Endothelial cell of umbilical vein (primary cell): ENCODE measurements at regions of chr9 and their contacts with region 1.

Region 1: DNA sequence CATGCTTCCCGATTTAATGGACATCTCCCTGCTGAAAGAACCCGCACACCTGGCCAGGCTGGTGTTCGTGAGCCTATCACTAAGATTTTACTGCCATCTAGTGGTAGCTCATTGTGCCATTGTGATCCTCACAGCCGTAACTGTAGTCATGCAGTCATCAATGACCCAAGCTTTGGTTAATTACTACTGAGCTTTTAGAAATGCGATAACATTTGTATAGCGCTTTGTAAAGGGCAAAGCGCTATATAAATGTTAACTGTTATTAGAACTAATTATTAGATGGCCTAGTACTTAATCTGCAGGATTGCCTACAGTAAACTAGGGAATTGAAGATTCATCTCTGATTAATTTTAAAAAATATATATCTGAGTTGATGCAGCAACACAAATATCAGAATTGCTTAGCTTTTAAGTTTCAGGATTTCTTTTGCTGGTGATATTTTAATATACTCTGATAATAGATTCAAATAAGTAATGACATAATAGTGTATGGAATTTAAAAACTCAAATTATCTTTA is 90.2 kb downstream of the HACD4 start:
- DNase-seq: peak; percentile 74
- H3K4me3 ChIP-seq: no peak overlapping the region
- H3K27ac ChIP-seq: no peak overlapping the region
- H3K4me1 ChIP-seq: no peaks in the 10 kb centered on the region
- H3K27me3 ChIP-seq: no peaks in the 10 kb centered on the region
- CTCF ChIP-seq: peak; percentile 63 to 72
- POLR2A ChIP-seq: no peak

Region 2: DNA sequence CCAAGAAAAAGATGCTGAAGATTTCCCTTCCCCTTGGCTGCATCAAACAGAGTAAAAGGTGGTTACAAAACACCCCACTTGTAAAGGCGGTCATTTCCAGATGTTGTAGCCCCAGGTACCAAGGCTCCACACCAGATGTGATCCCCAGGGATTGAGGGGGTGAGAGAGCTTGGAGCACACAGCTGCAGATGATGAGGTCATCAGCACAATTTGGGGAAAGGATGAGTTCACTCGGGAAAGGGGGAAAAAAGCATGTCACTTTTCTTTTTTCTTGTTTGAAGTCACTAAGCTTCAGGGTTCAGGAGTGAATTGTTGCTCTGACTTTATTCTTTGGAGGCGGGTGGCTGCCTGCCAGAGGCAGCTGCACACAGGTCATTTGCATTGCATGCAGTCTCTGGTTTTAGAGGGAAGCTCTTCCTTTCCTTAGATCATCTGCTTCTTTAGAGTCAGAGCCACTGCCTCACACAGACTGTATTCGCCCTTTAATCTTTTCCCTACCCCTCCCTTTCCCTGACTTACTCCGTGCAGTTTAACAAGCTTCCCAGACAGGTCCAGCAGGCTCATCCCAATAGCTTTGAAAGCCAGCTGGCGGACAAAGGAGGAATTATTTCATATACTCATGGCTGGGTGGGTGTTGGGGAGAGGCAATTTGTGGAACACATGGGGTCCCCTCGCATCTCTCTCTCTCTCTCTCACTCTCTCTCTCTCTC is 743.1 kb before region 1 on chr9:
- CTCF ChIA-PET with region 1: no interaction called
- POLR2A ChIA-PET with region 1: no interaction called
- dilution Hi-C with region 1: no loop called
- intact Hi-C with region 1: loop called (anchors 10 kb)
- DNase-seq: no peak
- H3K4me3 ChIP-seq: no peak overlapping the region
- H3K27ac ChIP-seq: no peak overlapping the region
- H3K4me1 ChIP-seq: no peaks in the 10 kb centered on the region
- H3K27me3 ChIP-seq: no peaks in the 10 kb centered on the region
- CTCF ChIP-seq: no peak
- POLR2A ChIP-seq: no peak

Region 3: DNA sequence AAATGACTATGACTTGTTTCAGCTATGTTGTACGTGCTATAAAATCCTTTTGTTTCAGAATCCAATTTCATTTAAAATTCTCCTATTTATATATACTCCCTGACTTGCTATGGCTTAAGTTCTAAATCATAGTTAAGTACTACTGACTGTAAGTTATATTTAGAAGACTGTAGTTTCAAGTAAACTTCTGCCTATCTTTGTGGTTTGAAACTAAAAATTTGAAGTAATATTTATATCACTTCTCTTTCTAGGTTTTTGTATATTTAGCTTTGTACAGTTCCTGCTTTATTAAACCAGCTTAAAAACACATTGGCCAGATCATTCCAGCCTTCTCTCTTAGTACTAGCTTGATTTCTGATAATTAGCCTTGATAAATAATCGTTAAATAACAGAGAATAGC is 515.2 kb before region 1 on chr9:
- CTCF ChIA-PET with region 1: interaction called, 9 read pairs
- POLR2A ChIA-PET with region 1: no interaction called
- dilution Hi-C with region 1: no loop called
- intact Hi-C with region 1: loop called (anchors 5 kb)
- DNase-seq: no peak
- H3K4me3 ChIP-seq: no peak overlapping the region
- H3K27ac ChIP-seq: no peak overlapping the region
- H3K4me1 ChIP-seq: no peaks in the 10 kb centered on the region
- H3K27me3 ChIP-seq: no peaks in the 10 kb centered on the region
- CTCF ChIP-seq: no peak
- POLR2A ChIP-seq: no peak

Region 4: GRCh38 chr9:20684035-20684872 is 257.0 kb before region 1 on chr9 and contains the start of gene FOCAD:
- CTCF ChIA-PET with region 1: interaction called, 7 read pairs
- POLR2A ChIA-PET with region 1: no interaction called
- dilution Hi-C with region 1: no loop called
- intact Hi-C with region 1: loop called (anchors 5 kb)
- DNase-seq: peak; percentile 97
- H3K4me3 ChIP-seq: peak within 1 kb of the TSS; percentile 69 to 83 (median 73)
- H3K27ac ChIP-seq: peak within 1 kb of the TSS; percentile 91
- H3K4me1 ChIP-seq: peaks cover 30% of the 10 kb centered on the region
- H3K27me3 ChIP-seq: no peaks in the 10 kb centered on the region
- CTCF ChIP-seq: no peak
- POLR2A ChIP-seq: peak; percentile 97
- total RNA-seq, gene FOCAD: 59.4 and 66.9 TPM in 2 replicates

Region 5: DNA sequence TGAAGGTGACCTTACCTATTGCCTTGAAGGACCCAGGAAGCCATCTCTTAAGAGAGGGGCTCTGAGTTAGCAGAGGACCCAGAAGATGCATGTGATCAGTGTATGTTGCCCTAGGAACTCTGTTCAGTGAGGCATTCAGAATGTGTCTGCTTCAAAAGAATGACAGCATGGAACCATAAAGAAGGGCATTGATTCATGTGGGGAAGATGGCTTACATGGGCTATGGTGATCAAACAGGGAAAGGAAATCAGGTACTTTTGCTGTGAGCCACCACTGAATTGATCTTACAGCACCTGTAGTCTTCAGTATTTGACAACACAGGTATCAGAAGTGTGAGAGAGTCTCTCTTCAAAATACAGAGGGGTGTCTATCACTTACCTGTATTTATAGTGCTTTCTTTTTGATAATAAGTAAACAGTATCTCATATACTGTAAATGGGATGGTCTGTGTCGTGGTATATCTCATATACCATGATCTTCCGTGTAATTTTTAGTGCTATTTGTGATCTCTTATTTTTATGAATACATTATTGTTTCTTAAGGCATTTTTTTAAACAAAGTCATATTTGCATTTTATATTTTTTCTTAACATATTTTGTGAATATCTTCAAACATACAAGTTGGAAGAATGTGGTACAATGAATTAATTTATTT is 200.2 kb before region 1 on chr9:
- CTCF ChIA-PET with region 1: no interaction called
- POLR2A ChIA-PET with region 1: no interaction called
- dilution Hi-C with region 1: no loop called
- intact Hi-C with region 1: no loop called
- DNase-seq: no peak
- H3K4me3 ChIP-seq: no peak overlapping the region
- H3K27ac ChIP-seq: no peak overlapping the region
- H3K4me1 ChIP-seq: no peaks in the 10 kb centered on the region
- H3K27me3 ChIP-seq: no peaks in the 10 kb centered on the region
- CTCF ChIP-seq: no peak
- POLR2A ChIP-seq: no peak

Region 6: DNA sequence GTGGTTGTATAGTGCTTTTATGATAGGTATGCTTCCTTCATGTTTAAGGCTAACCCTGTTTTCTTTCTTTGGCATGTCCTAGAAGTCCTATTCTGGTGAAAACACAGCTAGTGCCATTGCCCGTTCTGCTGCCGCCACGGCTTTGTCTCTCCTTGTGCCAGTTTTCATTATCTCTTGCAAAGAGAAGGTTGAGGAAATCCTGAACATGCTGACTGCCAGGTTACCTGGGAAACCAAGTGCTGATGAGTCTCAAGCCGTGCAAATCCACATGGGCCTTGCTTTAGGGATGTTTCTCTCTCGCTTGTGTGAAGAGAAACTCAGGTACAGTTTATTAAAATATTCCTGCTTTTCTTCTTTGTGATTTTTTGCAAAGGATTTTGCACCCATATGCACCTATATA is 12.0 kb before region 1 on chr9:
- CTCF ChIA-PET with region 1: interaction called, 32 read pairs
- POLR2A ChIA-PET with region 1: no interaction called
- dilution Hi-C with region 1: no loop called
- intact Hi-C with region 1: no loop called
- DNase-seq: peak; percentile 48
- H3K4me3 ChIP-seq: no peak overlapping the region
- H3K27ac ChIP-seq: no peak overlapping the region
- H3K4me1 ChIP-seq: no peaks in the 10 kb centered on the region
- H3K27me3 ChIP-seq: no peaks in the 10 kb centered on the region
- CTCF ChIP-seq: no peak
- POLR2A ChIP-seq: no peak